GM10248 (cell line): ENCODE measurements at regions of chr10 and their contacts with region 1.

Region 1: GRCh38 chr10:32049113-32049512 is 7.1 kb downstream of the KIF5B start:
- DNase-seq: no peak
- CTCF ChIP-seq: no peak

Region 2: GRCh38 chr10:32033171-32033570 is 15.9 kb before region 1 on chr10:
- CTCF ChIA-PET with region 1: interaction called, 10 read pairs
- POLR2A ChIA-PET with region 1: no interaction called
- DNase-seq: no peak
- CTCF ChIP-seq: no peak